Posterior vena cava (tissue), 2 donors: ENCODE measurements at regions of chr11 and their contacts with region 1.

Region 1: GRCh38 chr11:47295385-47295784 is 25.5 kb downstream of the MADD start:
- DNase-seq: no peak

Region 2: GRCh38 chr11:47123094-47123493 is 172.3 kb before region 1 on chr11:
- intact Hi-C with region 1: no loop called
- DNase-seq: no peak

Region 3: GRCh38 chr11:47259178-47259977 is 36.0 kb before region 1 on chr11:
- intact Hi-C with region 1: loop called in 1 of 2 experiments (anchors 1 kb)
- DNase-seq: no peak

Region 4: GRCh38 chr11:47269829-47270305 is 25.5 kb before region 1 on chr11 and contains the start of gene MADD:
- intact Hi-C with region 1: no loop called
- DNase-seq: peak; percentile 95
- total RNA-seq, gene MADD: 32.4 to 32.5 TPM

Region 5: GRCh38 chr11:47333886-47334443 is 38.6 kb after region 1 on chr11:
- intact Hi-C with region 1: loop called in 1 of 2 experiments (anchors 1 kb)
- DNase-seq: no peak

Region 6: GRCh38 chr11:47688111-47688510 is 392.7 kb after region 1 on chr11:
- intact Hi-C with region 1: no loop called
- DNase-seq: no peak

Region 7: GRCh38 chr11:47705721-47706120 is 410.3 kb after region 1 on chr11:
- intact Hi-C with region 1: no loop called
- DNase-seq: no peak